ENCODE measurements at regions of chr1 and their contacts with region 1.

Region 1: GRCh38 chr1:19179597-19180264 is 30.3 kb downstream of the UBR4 start:
- DNase-seq: no peak
- ATAC-seq: no peak

Region 2: DNA sequence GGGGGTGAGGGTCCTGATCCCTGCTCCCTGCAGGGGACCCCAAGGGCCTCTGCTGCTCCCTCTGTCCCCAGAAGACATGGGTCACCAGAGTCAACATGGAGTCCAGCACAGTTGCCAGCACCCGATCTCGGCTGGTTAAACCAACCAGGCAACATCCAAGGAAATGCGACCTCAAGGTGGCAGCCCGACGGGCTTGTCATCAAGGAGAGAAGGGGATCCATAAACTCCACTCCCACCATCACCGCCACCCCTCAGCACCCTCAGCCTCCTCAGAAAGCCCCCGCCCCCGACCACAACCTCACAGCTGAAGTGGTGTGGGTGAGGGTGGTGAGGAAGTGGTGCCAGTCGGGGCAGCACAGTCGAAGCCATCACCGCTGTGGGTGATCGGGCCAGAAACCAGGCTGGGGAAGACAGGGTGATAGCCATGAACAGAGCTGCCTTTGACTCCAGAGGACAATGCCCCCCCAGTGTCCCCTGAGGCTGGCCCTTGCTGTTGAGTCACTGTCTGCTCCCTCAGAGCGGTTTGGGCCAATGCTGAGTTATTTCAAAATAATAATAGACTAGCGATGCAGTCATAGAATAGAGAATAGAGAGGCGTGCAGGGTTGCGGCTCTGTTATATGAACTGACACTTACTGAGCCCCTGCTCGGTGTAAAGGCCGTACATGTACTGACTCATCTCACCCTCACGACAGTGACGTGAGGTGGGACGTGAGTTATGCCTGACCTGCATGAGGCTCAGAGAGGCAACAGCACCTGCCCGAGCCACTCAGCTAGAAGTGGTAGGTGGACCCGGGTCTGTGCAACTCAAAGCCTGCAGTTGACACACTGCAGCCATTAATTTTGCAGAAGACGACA is 134.5 kb before region 1 on chr1:
- intact Hi-C with region 1: no loop called
- DNase-seq: no peak
- ATAC-seq: peak in 1 of 2 donors; percentile 45

Region 3: GRCh38 chr1:19139711-19140110 is 40.0 kb before region 1 on chr1:
- intact Hi-C with region 1: loop called in 1 of 2 experiments (anchors 5 kb)
- DNase-seq: no peak
- ATAC-seq: no peak

Region 4: GRCh38 chr1:19240673-19241538 is 61.2 kb after region 1 on chr1:
- intact Hi-C with region 1: loop called in 1 of 2 experiments (anchors 2 kb)
- DNase-seq: peak; percentile 58
- ATAC-seq: peak; percentile 86 to 92

Region 5: DNA sequence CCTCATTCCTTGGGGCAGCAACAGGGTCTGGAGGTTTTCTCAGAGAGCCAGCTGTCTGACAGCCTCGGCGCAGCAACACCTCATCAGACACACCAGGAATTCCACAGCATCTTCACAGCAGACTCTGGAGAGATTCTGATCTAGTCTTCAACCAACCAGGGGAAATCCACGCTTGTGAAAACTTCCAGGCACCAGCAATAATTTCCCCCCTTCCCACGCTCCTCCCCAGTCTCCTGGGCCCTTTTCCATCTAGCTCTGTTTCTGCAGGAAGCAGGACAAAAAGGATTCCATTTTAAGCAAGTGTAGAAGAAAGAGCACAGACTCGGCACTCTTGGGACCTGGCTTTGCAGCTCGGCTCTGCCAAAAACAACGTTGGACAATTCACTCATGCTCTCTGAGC is 349.9 kb after region 1 on chr1:
- intact Hi-C with region 1: no loop called
- DNase-seq: no peak
- ATAC-seq: peak; percentile 34 to 52